AG04449 (cell line): ENCODE measurements at regions of chr1 and their contacts with region 1.

Region 1: GRCh38 chr1:18597160-18598042 is 33.2 kb upstream of the PAX7 start:
- DNase-seq: no peak
- H3K4me3 ChIP-seq: no peak overlapping the region
- CTCF ChIP-seq: peak; percentile 92

Region 2: DNA sequence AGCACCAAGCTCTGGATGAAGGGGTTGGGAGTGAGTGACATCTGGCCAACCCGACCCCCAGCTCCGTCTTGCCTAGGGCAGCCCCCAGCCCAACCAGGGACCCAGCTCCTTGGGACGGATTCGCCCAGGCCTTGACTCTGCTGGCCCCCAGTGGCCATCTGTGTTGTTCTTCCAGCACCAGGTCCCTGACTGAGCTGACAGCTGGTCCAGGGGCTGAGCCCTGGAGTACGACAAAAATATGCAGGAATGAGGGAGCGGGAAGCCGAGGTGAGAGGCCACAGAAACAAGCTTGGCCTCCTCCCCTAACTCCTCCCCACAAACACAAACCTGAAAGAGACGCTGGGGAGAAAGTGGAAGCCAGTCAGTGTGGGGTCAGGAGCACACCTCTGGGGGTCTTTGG is 21.8 kb before region 1 on chr1:
- CTCF ChIA-PET with region 1: interaction called, 14 read pairs
- POLR2A ChIA-PET with region 1: no interaction called
- DNase-seq: no peak
- H3K4me3 ChIP-seq: no peak overlapping the region
- CTCF ChIP-seq: peak; percentile 76

Region 3: DNA sequence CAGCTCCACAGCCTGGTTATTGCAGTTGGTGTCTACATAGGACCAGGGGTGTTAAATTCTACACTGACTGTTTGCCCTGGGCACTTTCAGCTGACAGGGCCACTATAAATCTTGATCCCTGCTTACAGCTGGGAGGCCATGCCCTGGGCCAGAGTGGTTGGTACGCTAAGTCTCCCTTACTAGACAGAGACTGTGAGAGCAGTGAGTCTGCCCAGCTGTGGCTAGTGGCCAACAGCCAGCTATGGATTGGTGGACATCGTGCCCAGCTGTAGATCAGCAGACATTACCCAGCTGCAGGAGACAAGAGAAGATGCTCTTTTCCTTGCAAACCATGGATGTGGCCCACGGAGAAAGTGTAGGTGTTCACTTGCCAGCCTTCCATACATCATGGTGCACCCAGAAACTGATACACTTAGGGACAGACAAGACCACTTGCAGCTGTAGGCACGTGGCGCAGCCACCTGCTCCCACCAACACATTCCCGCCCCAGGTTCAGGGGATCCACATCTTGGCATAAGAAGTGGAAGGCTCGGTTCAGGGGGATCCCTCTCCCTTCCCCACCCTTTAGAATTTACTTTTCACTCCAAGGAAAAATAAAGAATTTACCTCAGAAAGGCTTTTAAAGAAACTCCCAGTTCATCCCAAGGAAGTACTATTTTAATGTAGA is 16.8 kb after region 1 on chr1:
- CTCF ChIA-PET with region 1: interaction called, 10 read pairs
- POLR2A ChIA-PET with region 1: no interaction called
- DNase-seq: no peak
- H3K4me3 ChIP-seq: no peak overlapping the region
- CTCF ChIP-seq: no peak

Region 4: GRCh38 chr1:18820791-18821641 is 223.6 kb after region 1 on chr1:
- CTCF ChIA-PET with region 1: interaction called, 108 read pairs
- POLR2A ChIA-PET with region 1: no interaction called
- DNase-seq: no peak
- H3K4me3 ChIP-seq: no peak overlapping the region
- CTCF ChIP-seq: peak; percentile 97

Region 5: DNA sequence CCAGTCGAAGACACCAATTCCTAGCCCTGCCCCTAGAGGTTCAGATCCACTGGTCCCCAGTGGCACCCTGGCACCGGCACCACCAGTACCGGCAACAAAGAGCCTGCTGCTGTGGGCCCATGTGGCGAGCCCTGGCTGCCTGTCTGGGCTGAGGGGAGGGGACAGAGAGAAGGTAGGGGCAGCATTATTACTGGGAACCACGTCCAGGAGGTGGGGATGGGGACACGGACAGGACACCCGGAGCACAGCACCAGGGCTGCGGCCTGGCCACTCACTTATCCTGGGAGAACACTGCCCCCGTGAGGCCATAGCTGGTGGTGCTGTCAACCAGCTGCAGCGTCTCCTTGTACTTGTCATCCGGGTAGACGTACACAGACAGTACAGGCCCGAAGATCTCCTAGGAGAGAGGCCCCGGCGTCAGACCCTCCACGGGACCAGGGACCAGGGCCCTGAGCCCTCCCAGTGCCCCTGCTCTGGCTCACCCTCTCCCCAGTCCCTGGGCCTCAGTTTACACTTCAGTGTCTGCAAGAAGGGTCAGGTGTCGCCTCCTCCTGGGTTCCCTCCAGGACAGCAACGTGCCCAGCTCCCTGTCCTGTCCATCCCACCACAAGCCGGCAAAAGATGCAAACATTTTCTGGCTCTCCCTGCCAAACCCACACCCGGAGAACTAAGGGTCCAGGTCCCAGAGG is 277.9 kb after region 1 on chr1:
- CTCF ChIA-PET with region 1: interaction called, 93 read pairs
- POLR2A ChIA-PET with region 1: no interaction called
- DNase-seq: peak; percentile 34
- H3K4me3 ChIP-seq: no peak overlapping the region
- CTCF ChIP-seq: peak; percentile 97

Region 6: GRCh38 chr1:18890711-18891425 is 293.5 kb after region 1 on chr1:
- CTCF ChIA-PET with region 1: interaction called, 10 read pairs
- POLR2A ChIA-PET with region 1: no interaction called
- DNase-seq: no peak
- H3K4me3 ChIP-seq: no peak overlapping the region
- CTCF ChIP-seq: no peak